Activated CD4-positive, alpha-beta T cell treated with anti-CD3 and anti-CD28 coated beads, Interleukin-2, amount 10 ng/mL, durations not matched to agents 24 days and 14 days (primary cell): ENCODE measurements at regions of chr1 and their contacts with region 1.

Region 1: DNA sequence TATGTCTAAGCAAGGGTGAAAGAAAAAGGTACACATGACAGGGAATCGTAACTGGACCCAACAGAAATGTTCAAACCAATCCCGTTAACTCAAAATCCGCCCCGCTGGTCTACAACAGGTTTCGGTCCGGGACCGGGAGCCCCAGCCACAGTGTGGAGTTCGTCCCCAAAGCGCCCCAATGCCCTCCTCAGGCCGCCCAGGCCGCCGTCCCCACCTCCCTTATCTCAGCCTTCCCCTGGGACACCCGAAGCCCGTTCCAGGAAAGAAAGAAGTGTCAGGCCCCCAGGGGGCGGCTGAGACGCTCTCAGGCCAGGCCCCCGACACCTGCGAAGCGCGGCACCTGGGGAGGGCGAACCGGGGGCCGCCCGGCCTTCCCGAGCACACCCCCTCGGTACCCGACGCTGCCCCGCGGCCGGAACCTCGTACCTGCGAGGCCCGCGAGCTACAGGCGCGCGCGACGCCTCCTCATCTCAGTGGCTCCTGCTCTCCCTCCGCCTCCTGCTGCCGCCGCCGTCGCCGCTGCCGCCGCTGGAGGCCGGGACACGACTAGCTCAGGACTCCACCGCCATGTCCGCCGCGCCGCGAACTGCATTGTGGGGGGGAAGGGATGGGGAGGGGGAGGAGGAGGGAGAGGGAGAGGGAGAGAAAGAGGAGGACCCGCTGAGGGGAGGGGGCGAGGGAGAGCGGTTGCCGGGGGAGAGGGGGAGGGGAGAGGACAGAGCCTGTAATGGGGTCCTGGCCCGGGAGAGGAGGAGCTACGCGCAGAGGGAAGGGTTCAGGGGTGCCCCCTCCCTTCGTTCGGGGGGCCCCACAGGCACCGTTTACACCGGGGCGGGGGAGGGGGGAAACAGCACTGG is at the start of gene TUT4:
- DNase-seq: peak; percentile 93
- H3K4me3 Mint-ChIP-seq: no peak within 1 kb of the TSS
- H3K27ac Mint-ChIP-seq: peak within 1 kb of the TSS; percentile 91
- H3K4me1 Mint-ChIP-seq: peaks cover 23% of the 10 kb centered on the region
- H3K27me3 Mint-ChIP-seq: peaks cover 2% of the 10 kb centered on the region
- total RNA-seq, gene TUT4: 57.6 and 61.2 TPM in 2 replicates

Region 2: DNA sequence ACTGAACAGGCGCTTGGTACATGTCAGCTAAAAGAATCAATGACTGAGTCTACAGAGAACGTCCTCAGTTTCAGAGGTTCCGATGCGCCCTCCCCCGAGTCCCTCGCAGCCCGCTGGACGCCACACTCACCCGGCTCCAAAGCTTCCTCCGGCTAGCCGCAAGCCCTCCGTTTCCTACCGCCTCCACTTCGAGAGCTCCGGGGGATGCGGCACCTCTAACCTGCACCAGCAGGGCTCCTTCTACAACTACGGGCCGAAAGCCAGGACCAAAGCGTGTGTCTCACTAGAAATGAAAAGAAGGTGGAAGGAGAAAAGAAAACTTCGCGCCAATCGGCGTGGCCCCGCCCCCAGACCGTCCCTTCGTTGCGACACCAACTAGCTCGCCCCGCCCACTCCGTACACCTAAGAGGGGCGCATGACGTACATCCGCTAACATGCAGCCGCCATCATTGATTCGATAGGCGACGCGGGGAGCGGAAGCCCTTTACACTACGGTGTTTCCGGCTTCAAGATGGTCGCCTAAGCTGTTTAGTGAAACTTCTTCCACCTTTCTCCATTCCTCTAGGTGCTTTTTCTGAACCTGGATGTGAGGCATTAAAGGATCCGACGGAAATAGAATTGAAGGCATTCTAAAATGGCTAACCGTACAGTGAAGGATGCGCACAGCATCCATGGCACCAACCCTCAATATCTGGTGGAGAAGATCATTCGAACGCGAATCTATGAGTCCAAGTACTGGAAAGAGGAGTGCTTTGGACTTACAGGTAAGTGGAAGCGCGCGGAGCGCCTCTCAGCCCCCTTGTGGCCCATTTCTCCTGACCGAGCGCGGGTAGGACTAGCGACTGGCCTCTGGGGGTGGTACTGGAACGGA is 148.4 kb before region 1 on chr1 and contains the starts of genes ORC1 and PRPF38A:
- intact Hi-C with region 1: loop called (anchors 1 kb)
- DNase-seq: peak; percentile 99
- H3K4me3 Mint-ChIP-seq: peak within 1 kb of the TSS; percentile 99
- H3K27ac Mint-ChIP-seq: peak within 1 kb of the TSS; percentile 100
- H3K4me1 Mint-ChIP-seq: peaks cover 47% of the 10 kb centered on the region
- H3K27me3 Mint-ChIP-seq: no peaks in the 10 kb centered on the region
- total RNA-seq, gene ORC1: 43.5 and 44.2 TPM in 2 replicates
- total RNA-seq, gene PRPF38A: 106 and 108 TPM in 2 replicates

Region 3: DNA sequence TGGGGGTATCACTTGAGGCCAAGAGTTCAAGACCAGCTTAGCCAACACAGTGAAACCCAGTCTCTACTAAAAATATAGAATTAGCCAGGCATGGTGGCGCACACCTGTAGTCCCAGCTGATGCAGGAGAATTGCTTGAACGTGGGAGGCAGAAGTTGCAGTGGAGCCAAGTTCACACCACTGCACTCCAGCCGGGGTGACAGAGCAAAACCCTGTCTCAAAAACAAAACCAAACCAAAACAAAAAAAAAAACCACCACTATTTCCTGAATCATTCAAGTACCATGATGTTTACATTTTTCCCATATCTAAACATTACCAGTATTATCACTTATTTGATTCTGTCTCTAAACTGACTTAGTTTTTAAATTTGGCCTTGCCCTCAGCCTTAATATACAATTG is 29.4 kb before region 1 on chr1:
- intact Hi-C with region 1: loop called (anchors 1 kb)
- DNase-seq: peak; percentile 73
- H3K4me3 Mint-ChIP-seq: no peak overlapping the region
- H3K27ac Mint-ChIP-seq: no peak overlapping the region
- H3K4me1 Mint-ChIP-seq: peaks cover 14% of the 10 kb centered on the region
- H3K27me3 Mint-ChIP-seq: no peaks in the 10 kb centered on the region

Region 4: GRCh38 chr1:52636721-52637695 is 84.3 kb after region 1 on chr1:
- intact Hi-C with region 1: loop called (anchors 2 kb)
- DNase-seq: peak; percentile 94
- H3K4me3 Mint-ChIP-seq: peak overlapping the region; percentile 83
- H3K27ac Mint-ChIP-seq: peak overlapping the region; percentile 99
- H3K4me1 Mint-ChIP-seq: peaks cover 60% of the 10 kb centered on the region
- H3K27me3 Mint-ChIP-seq: peaks cover 8% of the 10 kb centered on the region

Region 5: DNA sequence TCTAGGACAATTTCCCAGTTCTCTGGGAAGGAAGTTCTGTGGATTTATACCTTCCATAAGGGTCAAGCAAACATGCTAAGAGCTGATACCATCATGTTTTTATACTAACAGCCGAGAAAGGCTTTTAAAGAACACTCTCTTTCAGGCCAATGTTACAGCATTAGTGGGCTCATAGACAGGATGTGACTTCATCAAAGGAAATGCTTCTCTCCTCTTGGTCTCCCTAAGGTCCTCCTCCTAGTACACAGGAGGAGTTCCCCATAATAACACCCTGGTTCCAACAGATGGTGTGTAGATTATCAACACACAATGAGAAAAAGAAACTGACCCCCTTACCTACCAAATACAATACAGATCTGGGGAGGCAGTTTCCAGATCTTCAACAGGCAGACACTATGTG is 1212.9 kb after region 1 on chr1:
- intact Hi-C with region 1: no loop called
- DNase-seq: peak; percentile 71
- H3K4me3 Mint-ChIP-seq: peak overlapping the region; percentile 72
- H3K27ac Mint-ChIP-seq: peak overlapping the region; percentile 82
- H3K4me1 Mint-ChIP-seq: peaks cover 27% of the 10 kb centered on the region
- H3K27me3 Mint-ChIP-seq: no peaks in the 10 kb centered on the region